CD4-positive, alpha-beta memory T cell (primary cell): ENCODE measurements at regions of chr4 and their contacts with region 1.

Region 1: GRCh38 chr4:80072744-80073472 is at the start of gene ANTXR2:
- DNase-seq: peak; percentile 64 to 86 (median 68)
- H3K4me3 ChIP-seq: peak within 1 kb of the TSS; percentile 68 to 75
- H3K4me3 Mint-ChIP-seq: peak within 1 kb of the TSS; percentile 97 to 99 (median 98)
- H3K27ac ChIP-seq: peak within 1 kb of the TSS; percentile 86
- H3K27ac Mint-ChIP-seq: peak within 1 kb of the TSS; percentile 97 to 99 (median 98)
- H3K4me1 ChIP-seq: peaks cover 74% of the 10 kb centered on the region
- H3K4me1 Mint-ChIP-seq: peaks cover 47 to 86% (median 59%) of the 10 kb centered on the region in 4 donors
- H3K27me3 ChIP-seq: no peaks in the 10 kb centered on the region
- H3K27me3 Mint-ChIP-seq: no peaks in the 10 kb centered on the region
- total RNA-seq, gene ANTXR2: 90.1 to 91.6 TPM

Region 2: GRCh38 chr4:80007745-80008149 is 65.2 kb before region 1 on chr4:
- CTCF ChIA-PET with region 1: no interaction called
- POLR2A ChIA-PET with region 1: interaction called, 9 read pairs
- intact Hi-C with region 1: loop called (anchors 2 kb)
- DNase-seq: no peak
- H3K4me3 ChIP-seq: no peak overlapping the region
- H3K4me3 Mint-ChIP-seq: peak overlapping the region in 7 of 8 donors; percentile 40 to 84 (median 74)
- H3K27ac ChIP-seq: peak overlapping the region; percentile 39
- H3K27ac Mint-ChIP-seq: peak overlapping the region; percentile 83 to 92 (median 91)
- H3K4me1 ChIP-seq: peaks cover 69% of the 10 kb centered on the region
- H3K4me1 Mint-ChIP-seq: peaks cover 46 to 77% (median 59%) of the 10 kb centered on the region in 4 donors
- H3K27me3 ChIP-seq: no peaks in the 10 kb centered on the region
- H3K27me3 Mint-ChIP-seq: no peaks in the 10 kb centered on the region

Region 3: GRCh38 chr4:80058740-80059139 is 14.2 kb before region 1 on chr4:
- CTCF ChIA-PET with region 1: interaction called, 17 read pairs
- POLR2A ChIA-PET with region 1: interaction called, 40 read pairs
- intact Hi-C with region 1: loop called (anchors 1 kb)
- DNase-seq: peak; percentile 75 to 90 (median 86)
- H3K4me3 ChIP-seq: peak overlapping the region in 1 of 2 donors; percentile 13
- H3K4me3 Mint-ChIP-seq: peak overlapping the region; percentile 74 to 95 (median 84)
- H3K27ac ChIP-seq: peak overlapping the region; percentile 85
- H3K27ac Mint-ChIP-seq: peak overlapping the region; percentile 97 to 100 (median 99)
- H3K4me1 ChIP-seq: peaks cover 65% of the 10 kb centered on the region
- H3K4me1 Mint-ChIP-seq: peaks cover 37 to 79% (median 54%) of the 10 kb centered on the region in 4 donors
- H3K27me3 ChIP-seq: no peaks in the 10 kb centered on the region
- H3K27me3 Mint-ChIP-seq: no peaks in the 10 kb centered on the region

Region 4: GRCh38 chr4:80196922-80197573 is 124.1 kb after region 1 on chr4 and contains the start of gene PRDM8:
- CTCF ChIA-PET with region 1: interaction called, 18 read pairs
- POLR2A ChIA-PET with region 1: interaction called, 47 read pairs
- intact Hi-C with region 1: no loop called
- DNase-seq: peak in 3 of 5 donors; percentile 40 to 61 (median 43)
- H3K4me3 ChIP-seq: peak within 1 kb of the TSS; percentile 7 to 25
- H3K4me3 Mint-ChIP-seq: peak within 1 kb of the TSS; percentile 63 to 86 (median 80)
- H3K27ac ChIP-seq: no peak within 1 kb of the TSS
- H3K27ac Mint-ChIP-seq: peak within 1 kb of the TSS; percentile 2 to 88 (median 68)
- H3K4me1 ChIP-seq: peaks cover 28% of the 10 kb centered on the region
- H3K4me1 Mint-ChIP-seq: peaks cover 23 to 53% (median 38%) of the 10 kb centered on the region in 4 donors
- H3K27me3 ChIP-seq: no peaks in the 10 kb centered on the region
- H3K27me3 Mint-ChIP-seq: no peaks in the 10 kb centered on the region
- total RNA-seq, gene PRDM8: 19.8 to 23.0 TPM